Naive thymus-derived CD4-positive, alpha-beta T cell (primary cell): ENCODE measurements at regions of chr1 and their contacts with region 1.

Region 1: DNA sequence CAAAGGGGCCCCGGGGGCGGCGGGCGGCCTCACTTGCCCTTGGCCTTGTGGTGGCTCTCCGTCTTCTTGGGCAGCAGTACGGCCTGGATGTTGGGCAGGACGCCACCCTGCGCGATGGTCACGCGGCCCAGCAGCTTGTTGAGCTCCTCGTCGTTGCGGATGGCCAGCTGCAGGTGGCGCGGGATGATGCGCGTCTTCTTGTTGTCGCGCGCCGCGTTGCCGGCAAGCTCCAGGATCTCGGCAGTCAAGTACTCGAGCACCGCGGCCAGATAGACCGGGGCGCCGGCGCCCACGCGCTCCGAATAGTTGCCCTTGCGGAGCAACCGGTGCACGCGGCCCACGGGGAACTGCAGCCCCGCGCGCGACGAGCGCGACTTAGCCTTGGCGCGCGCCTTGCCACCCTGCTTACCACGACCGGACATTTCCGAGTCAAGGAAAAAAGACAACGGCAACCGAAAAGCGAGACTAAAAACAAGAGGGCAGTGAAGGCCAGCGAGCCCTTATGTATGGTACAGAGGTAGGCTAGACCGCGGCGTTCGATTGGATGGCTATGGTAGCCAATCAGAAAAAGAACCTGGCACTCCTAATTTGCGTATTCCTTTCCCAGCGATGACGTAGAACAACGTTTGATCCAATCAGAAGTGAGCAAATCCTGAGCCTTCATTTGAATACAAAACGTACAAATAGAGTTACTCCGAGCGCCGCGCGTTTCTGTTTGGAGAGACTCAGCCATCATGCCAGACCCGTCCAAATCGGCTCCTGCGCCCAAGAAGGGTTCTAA is 29.6 kb upstream of the RNF187 start:
- DNase-seq: peak; percentile 61 to 95 (median 88)
- ATAC-seq: peak; percentile 88
- H3K4me3 ChIP-seq: peak overlapping the region; percentile 78
- H3K4me3 Mint-ChIP-seq: peak overlapping the region; percentile 80 to 97 (median 94)
- H3K27ac ChIP-seq: peak overlapping the region; percentile 87
- H3K27ac Mint-ChIP-seq: peak overlapping the region; percentile 93 to 99 (median 98)
- H3K4me1 ChIP-seq: peaks cover 14 to 17% of the 10 kb centered on the region in 2 donors
- H3K4me1 Mint-ChIP-seq: peaks cover 26 to 64% (median 42%) of the 10 kb centered on the region in 7 donors
- H3K27me3 ChIP-seq: no peaks in the 10 kb centered on the region
- H3K27me3 Mint-ChIP-seq: peaks cover 0 to 7% (median 2%) of the 10 kb centered on the region in 5 donors

Region 2: DNA sequence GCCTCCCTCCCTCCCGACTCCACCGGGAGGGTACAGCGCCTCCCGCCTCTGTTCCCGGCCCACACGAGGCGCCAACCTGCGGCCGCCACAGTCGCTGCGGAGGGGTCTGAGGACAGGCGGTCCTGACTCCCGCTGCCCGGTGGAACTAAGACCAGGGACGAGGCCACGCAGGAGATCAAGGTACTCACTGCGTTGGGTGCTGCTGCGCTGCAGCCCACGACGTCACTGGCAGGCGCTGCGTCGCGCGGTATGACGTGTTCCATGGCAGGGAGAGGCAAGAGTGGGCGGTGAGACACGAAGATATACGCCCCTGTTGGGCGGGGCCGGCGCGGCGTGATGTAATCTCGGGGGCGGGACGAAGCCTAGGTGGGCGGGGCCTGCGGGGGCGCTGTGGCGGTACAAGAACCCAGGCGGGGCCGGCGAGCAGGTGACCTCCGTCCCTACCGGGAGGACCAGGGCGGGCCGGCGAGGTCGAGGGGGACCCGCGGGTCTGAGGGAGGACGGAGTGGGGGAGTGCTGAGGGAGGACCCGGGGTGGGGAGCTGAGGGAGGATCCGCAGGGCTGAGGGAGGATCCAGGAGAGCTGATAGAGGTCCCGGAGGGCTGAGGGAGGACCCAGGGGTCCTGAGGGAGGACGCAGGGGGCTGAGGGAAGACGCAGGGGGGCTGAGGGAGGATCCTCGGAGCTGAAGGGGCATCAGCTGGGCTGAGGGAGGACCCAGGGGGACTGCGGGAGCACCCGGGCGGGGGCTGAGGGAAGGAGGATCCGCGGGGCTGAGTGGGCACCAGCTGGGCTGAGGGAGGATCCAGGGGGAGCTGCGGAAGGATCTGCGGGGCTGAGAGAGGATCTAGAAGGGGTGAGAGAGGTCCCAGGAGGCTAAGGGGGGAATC is 348.3 kb before region 1 on chr1 and contains the start of gene MRPL55:
- CTCF ChIA-PET with region 1: no interaction called
- POLR2A ChIA-PET with region 1: no interaction called
- intact Hi-C with region 1: loop called (anchors 1 to 2 kb)
- DNase-seq: peak; percentile 97 to 100 (median 99)
- ATAC-seq: peak; percentile 99
- H3K4me3 ChIP-seq: peak within 1 kb of the TSS; percentile 100
- H3K4me3 Mint-ChIP-seq: peak within 1 kb of the TSS; percentile 87 to 95 (median 93)
- H3K27ac ChIP-seq: peak within 1 kb of the TSS; percentile 94
- H3K27ac Mint-ChIP-seq: peak within 1 kb of the TSS; percentile 88 to 98 (median 95)
- H3K4me1 ChIP-seq: peaks cover 9 to 16% of the 10 kb centered on the region in 2 donors
- H3K4me1 Mint-ChIP-seq: peaks cover 5 to 37% (median 26%) of the 10 kb centered on the region in 7 donors
- H3K27me3 ChIP-seq: no peaks in the 10 kb centered on the region
- H3K27me3 Mint-ChIP-seq: peaks cover 0 to 3% (median 0%) of the 10 kb centered on the region in 5 donors
- total RNA-seq, gene MRPL55: 34.3 to 79.3 (median 65.2) TPM

Region 3: DNA sequence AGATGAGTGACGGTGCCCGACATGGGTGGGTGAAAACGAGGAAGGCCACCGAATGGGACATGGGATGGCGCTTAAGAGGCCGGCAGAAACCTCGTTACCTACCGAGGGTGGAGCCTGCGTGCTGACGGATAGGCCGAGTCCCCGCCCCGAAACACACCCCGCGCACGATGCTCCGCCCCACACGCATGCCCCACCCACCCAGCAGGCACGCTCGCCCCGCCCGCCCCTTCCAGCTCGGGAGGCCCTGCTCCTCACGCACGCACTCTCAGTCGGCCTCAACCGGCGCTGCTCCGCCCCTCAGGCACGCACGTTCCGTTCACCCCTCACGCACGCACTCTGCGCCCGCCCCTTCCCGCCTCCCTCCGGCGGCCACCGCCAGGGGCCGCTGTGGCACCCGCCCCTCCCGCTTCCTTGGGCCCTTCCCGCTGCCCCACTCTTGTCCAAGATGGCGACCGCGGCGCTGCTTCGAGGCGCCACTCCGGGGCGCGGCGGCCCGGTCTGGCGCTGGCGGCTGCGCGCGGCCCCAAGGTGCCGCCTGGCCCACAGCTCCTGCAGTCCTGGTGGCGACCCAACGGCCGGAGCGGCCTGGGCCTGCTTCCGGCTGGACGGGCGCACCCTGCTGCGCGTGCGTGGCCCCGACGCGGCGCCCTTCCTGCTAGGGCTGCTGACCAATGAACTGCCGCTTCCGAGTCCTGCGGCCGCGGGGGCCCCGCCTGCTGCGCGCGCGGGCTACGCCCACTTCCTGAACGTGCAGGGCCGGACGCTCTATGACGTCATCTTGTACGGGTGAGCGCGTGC is 292.0 kb before region 1 on chr1 and contains the start of gene IBA57:
- CTCF ChIA-PET with region 1: interaction called, 3 read pairs
- POLR2A ChIA-PET with region 1: interaction called, 4 read pairs
- intact Hi-C with region 1: loop called (anchors 1 kb)
- DNase-seq: peak; percentile 99 to 100 (median 100)
- ATAC-seq: peak; percentile 89
- H3K4me3 ChIP-seq: peak within 1 kb of the TSS; percentile 79
- H3K4me3 Mint-ChIP-seq: peak within 1 kb of the TSS; percentile 76 to 92 (median 88)
- H3K27ac ChIP-seq: peak within 1 kb of the TSS; percentile 97
- H3K27ac Mint-ChIP-seq: peak within 1 kb of the TSS; percentile 87 to 98 (median 98)
- H3K4me1 ChIP-seq: peaks cover 14 to 39% of the 10 kb centered on the region in 2 donors
- H3K4me1 Mint-ChIP-seq: peaks cover 10 to 65% (median 48%) of the 10 kb centered on the region in 7 donors
- H3K27me3 ChIP-seq: no peaks in the 10 kb centered on the region
- H3K27me3 Mint-ChIP-seq: no peaks in the 10 kb centered on the region
- total RNA-seq, gene IBA57: 9.3 to 17.1 (median 10.9) TPM

Region 4: DNA sequence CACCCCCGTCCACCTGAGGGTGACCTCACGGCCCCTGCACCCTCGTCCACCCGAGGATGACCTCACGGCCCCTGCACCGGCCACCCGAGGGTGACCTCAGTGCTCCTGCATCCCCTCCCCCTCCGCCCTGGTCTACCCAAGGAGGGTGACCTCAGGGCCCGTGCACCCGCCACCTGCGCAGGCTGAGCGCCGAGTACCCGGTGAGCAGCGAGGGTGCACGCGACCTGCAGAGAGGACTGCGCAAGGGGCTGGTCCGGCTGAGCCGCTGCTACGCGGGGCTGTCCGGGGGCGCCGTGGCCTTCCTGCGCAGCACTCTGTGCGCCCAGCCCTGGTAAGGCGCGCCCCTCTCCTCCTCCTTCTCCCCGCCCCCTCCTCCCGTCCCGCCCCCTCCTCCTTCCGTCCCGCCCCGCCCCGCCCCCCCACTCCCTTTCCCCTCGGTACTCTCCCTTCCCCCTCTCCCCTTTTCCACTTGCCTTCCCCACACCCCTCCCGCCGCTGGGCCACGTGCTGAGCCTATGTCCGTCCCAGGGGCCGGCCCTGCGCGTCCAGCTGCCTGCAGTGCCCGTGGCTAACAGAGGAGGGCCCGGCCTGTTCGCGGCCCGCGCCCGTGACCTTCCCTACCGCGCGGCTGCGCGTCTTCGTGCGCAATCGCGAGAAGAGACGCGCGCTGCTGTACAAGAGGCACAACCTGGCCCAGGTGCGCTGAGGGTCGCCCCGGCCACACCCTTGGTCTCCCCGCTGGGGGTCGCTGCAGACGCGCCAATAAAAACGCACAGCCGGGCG is 79.3 kb before region 1 on chr1:
- CTCF ChIA-PET with region 1: no interaction called
- POLR2A ChIA-PET with region 1: no interaction called
- intact Hi-C with region 1: loop called (anchors 1 to 2 kb)
- DNase-seq: peak; percentile 37 to 75 (median 61)
- ATAC-seq: peak; percentile 58
- H3K4me3 ChIP-seq: peak overlapping the region; percentile 37
- H3K4me3 Mint-ChIP-seq: peak overlapping the region; percentile 80 to 90 (median 84)
- H3K27ac ChIP-seq: no peak overlapping the region
- H3K27ac Mint-ChIP-seq: peak overlapping the region in 4 of 9 donors; percentile 28 to 72 (median 51)
- H3K4me1 ChIP-seq: no peaks in the 10 kb centered on the region
- H3K4me1 Mint-ChIP-seq: peaks cover 6 to 18% (median 8%) of the 10 kb centered on the region in 7 donors
- H3K27me3 ChIP-seq: peaks cover 0 to 4% of the 10 kb centered on the region in 2 donors
- H3K27me3 Mint-ChIP-seq: peaks cover 0 to 42% (median 9%) of the 10 kb centered on the region in 5 donors

Region 5: DNA sequence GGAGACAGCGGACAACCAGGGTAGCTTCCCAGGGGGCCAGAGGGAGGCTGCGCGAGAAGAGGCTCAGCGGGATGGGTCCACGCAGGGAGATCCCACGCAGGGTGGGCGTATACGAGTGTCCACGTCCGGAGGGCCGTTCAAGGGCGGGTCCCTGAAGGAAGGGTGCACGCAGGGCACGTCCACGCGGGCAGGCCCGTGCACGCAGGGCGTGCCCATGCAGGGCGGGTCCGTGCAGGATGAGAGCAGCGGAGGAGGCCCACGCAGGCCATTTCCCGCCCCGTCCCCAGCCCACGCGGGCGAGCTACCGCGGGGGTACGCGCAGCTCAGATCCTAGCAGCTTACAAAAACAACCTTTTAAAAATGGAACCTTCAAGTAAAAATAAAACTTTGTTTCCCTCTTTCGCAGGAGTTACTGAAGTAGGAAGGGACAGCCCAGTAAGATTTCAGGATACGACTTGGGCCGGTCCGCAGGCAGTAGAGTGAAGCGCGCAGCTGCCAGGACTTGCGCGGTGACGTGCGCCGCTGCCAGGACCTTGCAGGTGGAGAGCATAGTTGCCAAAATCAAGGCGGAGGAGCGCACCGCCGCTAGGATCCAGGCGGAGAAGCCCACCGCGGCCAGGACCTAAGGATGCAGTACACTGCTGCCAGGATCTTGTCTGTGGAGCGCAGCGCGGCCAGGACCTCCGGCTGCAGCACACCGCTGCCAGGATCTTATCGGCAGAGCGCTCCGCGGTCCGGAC is 29.2 kb after region 1 on chr1:
- CTCF ChIA-PET with region 1: interaction called, 8 read pairs
- POLR2A ChIA-PET with region 1: interaction called, 38 read pairs
- intact Hi-C with region 1: loop called (anchors 1 kb)
- DNase-seq: peak; percentile 76 to 91 (median 86)
- ATAC-seq: peak; percentile 85
- H3K4me3 ChIP-seq: peak overlapping the region; percentile 98
- H3K4me3 Mint-ChIP-seq: peak overlapping the region; percentile 92 to 99 (median 98)
- H3K27ac ChIP-seq: peak overlapping the region; percentile 99
- H3K27ac Mint-ChIP-seq: peak overlapping the region; percentile 99 to 100 (median 100)
- H3K4me1 ChIP-seq: peaks cover 15 to 19% of the 10 kb centered on the region in 2 donors
- H3K4me1 Mint-ChIP-seq: peaks cover 14 to 49% (median 36%) of the 10 kb centered on the region in 7 donors
- H3K27me3 ChIP-seq: no peaks in the 10 kb centered on the region
- H3K27me3 Mint-ChIP-seq: no peaks in the 10 kb centered on the region

Region 6: DNA sequence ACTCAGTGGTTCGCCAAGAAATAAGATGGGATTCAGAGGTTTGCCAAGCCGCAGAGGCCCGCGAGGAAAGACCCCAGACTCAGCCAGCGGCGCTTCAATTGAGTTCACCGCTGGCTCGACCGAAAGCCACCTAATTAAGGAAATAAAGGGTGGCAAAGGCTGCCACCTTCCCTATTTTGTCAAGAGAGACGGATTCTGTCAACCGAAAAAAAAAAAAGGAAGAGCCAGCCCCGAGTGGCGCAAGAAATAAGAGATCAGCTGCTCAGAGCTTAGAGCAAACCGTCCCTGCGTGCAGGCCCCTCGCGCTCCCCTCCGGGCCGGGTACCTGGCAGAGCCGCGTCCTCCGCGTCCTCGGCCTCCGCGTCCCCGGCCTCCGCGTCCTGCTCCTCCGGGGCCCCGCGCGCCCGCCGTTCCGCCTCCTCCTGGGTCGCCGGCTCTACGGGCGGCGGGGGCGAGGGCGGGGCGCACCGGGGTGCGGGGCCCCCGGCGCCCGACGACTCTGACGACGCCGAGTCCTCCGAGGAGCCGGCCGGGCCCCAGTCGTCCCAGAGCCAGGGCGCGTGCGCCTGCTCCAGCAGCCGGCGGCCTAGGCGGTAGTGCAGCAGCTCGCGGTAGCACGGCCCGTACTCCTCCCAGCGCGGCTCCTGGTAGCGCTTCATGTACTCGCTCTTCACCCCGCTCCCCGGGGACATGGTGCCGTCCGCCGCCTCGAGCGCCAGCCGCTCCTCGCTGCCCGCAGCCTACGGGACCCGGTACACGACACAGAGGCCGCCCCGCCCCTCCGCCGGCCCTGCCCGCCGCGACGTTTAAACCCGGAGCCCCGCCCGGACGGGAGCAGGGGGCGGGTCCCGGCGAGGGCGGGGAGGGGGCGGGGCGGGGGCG is 884.4 kb after region 1 on chr1:
- CTCF ChIA-PET with region 1: no interaction called
- POLR2A ChIA-PET with region 1: no interaction called
- intact Hi-C with region 1: loop called (anchors 5 kb)
- DNase-seq: peak; percentile 78 to 87 (median 84)
- ATAC-seq: peak; percentile 92
- H3K4me3 ChIP-seq: peak overlapping the region; percentile 87
- H3K4me3 Mint-ChIP-seq: peak overlapping the region; percentile 88 to 96 (median 93)
- H3K27ac ChIP-seq: peak overlapping the region; percentile 88
- H3K27ac Mint-ChIP-seq: peak overlapping the region; percentile 72 to 93 (median 89)
- H3K4me1 ChIP-seq: peaks cover 5 to 7% of the 10 kb centered on the region in 2 donors
- H3K4me1 Mint-ChIP-seq: peaks cover 32 to 59% (median 49%) of the 10 kb centered on the region in 7 donors
- H3K27me3 ChIP-seq: no peaks in the 10 kb centered on the region
- H3K27me3 Mint-ChIP-seq: peaks cover 0 to 23% (median 7%) of the 10 kb centered on the region in 5 donors